ENCODE measurements at regions of chr22 and their contacts with region 1.

Region 1: DNA sequence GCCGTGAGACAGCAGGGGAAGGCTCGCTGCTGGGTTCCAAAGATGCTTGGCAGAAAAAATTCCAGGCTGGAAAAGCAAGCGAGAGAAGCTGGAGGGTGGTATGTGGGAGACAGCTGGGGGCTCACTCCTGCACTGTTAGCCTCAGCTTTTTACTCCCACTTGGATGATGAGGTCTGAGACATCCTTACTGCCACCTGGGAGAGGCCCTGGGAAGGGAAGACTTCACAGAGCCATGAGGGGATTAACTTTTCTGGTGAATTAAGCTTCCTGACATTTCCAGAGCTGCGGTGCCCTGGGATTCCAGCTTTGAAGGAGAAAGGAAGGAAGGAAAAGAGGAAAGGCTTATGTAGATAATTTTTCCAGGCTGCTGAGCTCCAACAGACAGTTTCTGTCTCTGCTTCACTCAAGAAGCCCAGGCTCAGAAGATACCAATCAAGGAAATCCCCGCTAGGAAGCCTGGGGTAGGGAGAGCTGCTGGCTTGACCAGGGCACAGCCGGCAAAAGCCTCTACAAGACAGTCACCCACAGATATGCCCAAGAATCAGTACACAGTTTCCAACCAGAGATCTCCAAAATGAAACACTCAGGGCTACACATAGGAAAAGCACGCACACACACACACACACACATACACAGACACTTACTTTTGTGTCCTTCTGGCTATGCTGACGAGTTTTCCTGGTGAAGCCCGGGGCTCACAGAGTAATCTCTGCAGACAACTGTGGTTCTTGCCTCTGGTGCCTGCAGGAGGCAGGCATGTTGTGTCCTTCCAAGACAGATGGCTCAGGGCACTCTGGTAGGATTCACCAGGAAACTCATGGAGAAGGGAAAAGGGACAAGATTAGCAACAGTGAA is 907 bp downstream of the MCHR1 start:
- DNase-seq: peak; percentile 60
- H3K4me3 Mint-ChIP-seq: no peak overlapping the region
- H3K27ac Mint-ChIP-seq: no peak overlapping the region
- H3K4me1 Mint-ChIP-seq: peaks cover 23% of the 10 kb centered on the region
- H3K27me3 Mint-ChIP-seq: peaks cover 9% of the 10 kb centered on the region

Region 2: DNA sequence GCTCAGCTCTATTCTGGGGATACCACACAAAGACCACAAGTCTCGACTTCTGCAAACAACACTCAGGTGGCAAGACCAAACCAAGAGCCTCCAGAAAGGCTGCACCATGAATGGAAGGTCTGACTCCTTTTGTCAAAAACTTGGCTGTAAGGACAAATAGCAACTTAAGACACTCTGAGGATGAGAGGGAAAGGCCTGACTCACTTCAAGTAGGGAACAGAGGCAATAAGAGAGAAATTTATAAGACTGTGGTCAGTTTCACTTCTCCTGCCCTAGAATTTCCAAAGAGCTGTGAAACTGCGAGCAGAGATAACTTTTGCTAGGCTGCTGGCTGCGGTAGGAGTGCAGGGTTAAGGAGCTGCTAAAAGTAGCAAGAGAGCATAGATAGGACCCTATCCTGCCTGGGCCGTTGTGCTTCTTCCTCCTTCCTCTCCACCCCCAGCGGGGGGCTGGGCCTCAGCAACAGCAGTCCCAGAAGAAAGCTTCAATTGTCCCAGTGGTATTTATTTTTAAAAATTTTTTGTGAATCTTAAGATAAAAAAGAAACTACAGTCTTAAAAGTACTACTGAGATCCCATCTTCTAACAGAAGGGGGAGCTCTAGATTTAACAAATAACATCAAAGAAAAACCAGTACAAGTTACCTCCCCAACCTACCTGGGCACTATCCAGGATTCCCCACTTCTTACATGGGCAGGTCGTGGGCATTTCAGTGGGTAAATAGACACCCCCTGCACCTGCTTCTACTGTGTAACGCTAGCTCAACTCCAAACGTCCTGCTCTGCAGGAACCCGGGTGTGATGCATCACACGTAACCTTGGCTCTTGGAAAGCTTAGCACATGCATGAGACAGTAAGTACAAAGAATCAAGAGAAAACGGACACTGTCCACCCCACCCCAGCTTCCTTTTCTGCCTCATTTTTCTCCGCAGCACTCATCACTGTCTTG is 243.4 kb before region 1 on chr22:
- intact Hi-C with region 1: loop called (anchors 1 kb)
- DNase-seq: peak; percentile 72
- H3K4me3 Mint-ChIP-seq: no peak overlapping the region
- H3K27ac Mint-ChIP-seq: peak overlapping the region; percentile 77
- H3K4me1 Mint-ChIP-seq: peaks cover 36% of the 10 kb centered on the region
- H3K27me3 Mint-ChIP-seq: no peaks in the 10 kb centered on the region

Region 3: GRCh38 chr22:40668611-40669411 is 11.4 kb before region 1 on chr22:
- intact Hi-C with region 1: loop called (anchors 1 kb)
- DNase-seq: peak; percentile 72
- H3K4me3 Mint-ChIP-seq: peak overlapping the region; percentile 63
- H3K27ac Mint-ChIP-seq: peak overlapping the region; percentile 91
- H3K4me1 Mint-ChIP-seq: peaks cover 26% of the 10 kb centered on the region
- H3K27me3 Mint-ChIP-seq: no peaks in the 10 kb centered on the region

Region 4: GRCh38 chr22:40764763-40765441 is 84.7 kb after region 1 on chr22:
- intact Hi-C with region 1: loop called (anchors 1 kb)
- DNase-seq: peak; percentile 63
- H3K4me3 Mint-ChIP-seq: peak overlapping the region; percentile 64
- H3K27ac Mint-ChIP-seq: peak overlapping the region; percentile 94
- H3K4me1 Mint-ChIP-seq: peaks cover 16% of the 10 kb centered on the region
- H3K27me3 Mint-ChIP-seq: no peaks in the 10 kb centered on the region

Region 5: GRCh38 chr22:40838486-40838885 is 158.3 kb after region 1 on chr22:
- intact Hi-C with region 1: no loop called
- DNase-seq: no peak
- H3K4me3 Mint-ChIP-seq: no peak overlapping the region
- H3K27ac Mint-ChIP-seq: no peak overlapping the region
- H3K4me1 Mint-ChIP-seq: peaks cover 13% of the 10 kb centered on the region
- H3K27me3 Mint-ChIP-seq: no peaks in the 10 kb centered on the region

Region 6: DNA sequence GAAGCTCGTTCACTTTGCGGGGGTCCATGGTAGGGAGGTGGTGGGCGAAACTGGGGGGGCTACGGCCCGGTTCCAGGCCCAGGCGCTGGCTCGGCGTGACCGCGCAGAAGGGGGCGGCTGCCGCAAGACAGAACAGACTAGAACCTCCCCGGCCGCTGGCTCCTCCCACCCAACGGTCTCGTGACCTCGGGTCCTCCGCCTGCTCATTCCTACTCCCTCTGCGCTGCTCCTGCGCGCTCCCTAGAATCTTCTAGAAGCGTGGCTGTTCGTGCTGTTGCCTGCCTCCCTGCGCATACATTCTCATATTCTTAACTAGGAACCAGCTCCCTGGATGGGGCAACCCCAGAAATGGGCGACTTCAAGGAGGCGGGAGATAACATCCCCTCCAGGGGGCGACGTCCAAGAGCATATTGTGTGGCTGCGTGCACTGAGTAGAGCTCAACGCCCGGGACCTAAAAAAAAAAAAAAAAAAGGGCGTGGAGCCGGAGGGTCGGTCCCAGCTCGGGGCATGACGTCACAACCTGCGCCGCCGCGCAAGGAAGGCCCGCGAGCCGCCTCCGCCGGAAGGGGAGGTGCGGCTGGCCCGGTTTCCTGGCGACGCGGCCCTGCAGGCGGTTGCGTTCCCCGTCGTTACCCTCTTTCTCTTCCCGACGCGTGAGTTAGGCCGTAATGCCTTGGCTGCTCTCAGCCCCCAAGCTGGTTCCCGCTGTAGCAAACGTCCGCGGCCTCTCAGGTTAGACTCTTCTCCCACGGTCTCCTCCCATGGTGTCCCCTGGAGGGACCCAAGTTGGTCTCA is 176.5 kb after region 1 on chr22 and contains the starts of genes ST13 and XPNPEP3:
- intact Hi-C with region 1: loop called (anchors 2 kb)
- DNase-seq: peak; percentile 99
- H3K4me3 Mint-ChIP-seq: peak within 1 kb of the TSS; percentile 96
- H3K27ac Mint-ChIP-seq: peak within 1 kb of the TSS; percentile 100
- H3K4me1 Mint-ChIP-seq: peaks cover 42% of the 10 kb centered on the region
- H3K27me3 Mint-ChIP-seq: peaks cover 2% of the 10 kb centered on the region
- total RNA-seq, gene ST13: 210 and 215 TPM in 2 replicates
- total RNA-seq, gene XPNPEP3: 17.6 and 17.7 TPM in 2 replicates

Measured in activated CD4-positive, alpha-beta T cell treated with anti-CD3 and anti-CD28 coated beads, Interleukin-2, amount 10 ng/mL, durations not matched to agents 24 days and 14 days (primary cell).